H1 (cell line): ENCODE measurements at regions of chr10 and their contacts with region 1.

Region 1: DNA sequence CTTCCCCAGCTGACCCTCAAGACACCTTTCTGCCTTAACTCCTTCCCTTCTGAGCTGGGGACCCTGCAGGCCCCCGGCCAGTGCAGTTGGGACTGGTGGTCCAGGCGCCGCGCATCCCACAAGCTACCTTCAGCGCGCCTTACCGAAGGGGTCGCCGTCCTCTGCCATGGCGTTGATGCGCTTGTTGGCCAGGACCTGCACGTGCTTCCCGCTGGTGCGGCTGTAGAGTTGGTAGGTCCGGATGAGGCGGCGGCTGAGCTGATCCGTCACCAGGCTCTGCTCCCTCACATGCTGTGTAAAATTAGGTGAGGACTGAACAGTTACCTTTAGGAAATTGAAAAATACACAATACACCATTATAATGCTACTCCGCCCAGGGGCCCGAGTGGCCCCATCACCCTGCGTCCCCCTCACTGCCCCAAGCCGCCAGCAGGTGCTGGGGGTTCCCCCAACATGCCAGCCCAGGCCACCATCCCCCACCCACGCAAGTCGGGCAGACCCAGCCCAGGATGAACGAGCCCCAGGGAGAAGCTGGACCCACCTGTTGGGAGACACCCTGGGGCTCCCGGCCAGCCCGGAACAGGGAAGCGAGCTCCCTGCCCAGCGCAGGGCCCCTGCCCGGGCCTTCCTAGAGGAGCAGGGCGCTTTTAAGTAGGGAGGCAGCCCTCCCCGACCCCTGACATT is 1.2 kb downstream of the FGF8 start:
- DNase-seq: peak in 1 of 2 experiments; percentile 79
- H3K4me3 ChIP-seq: peak overlapping the region in 3 of 4 experiments; percentile 27 to 54 (median 35); a peak in 6 of 8 replicates
- H3K27ac ChIP-seq: no peak overlapping the region
- H3K4me1 ChIP-seq: peaks cover 16 to 42% (median 28%) of the 10 kb centered on the region in 4 experiments
- H3K27me3 ChIP-seq: peaks cover 50 to 74% (median 69%) of the 10 kb centered on the region in 4 experiments
- CTCF ChIP-seq: no peak
- EP300 ChIP-seq: no peak
- POLR2A ChIP-seq: no peak
- RAD21 ChIP-seq: no peak

Region 2: DNA sequence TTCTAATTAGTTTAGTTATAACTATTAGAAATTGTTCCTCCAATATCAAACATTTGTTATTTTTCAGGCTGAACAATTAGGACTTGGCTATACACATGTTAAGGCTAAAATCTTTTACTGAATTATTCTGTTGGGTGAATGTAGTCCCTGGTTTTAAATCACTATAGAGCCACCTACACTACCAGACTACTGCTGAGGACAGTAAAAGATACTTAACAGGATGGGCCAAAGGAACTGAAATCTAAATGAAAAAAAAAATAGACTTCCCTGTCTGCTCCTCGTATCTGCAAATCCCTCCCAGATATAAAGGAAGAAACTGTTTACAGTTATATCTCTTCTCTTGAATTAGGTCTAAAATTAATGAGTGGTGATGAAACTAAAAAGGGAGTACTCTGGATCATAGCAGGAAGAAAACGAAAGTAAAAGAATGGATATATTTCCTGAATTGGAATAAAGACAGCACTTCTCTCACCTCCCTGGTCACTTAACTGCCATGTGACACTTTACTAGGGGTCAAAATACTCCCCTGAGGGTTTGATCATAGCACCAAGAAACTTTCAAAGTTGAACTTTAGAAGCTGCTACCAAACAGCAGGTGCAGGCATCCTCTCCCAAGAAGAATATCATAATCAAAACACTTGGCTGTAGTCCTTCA is 92.4 kb before region 1 on chr10:
- CTCF ChIA-PET with region 1: no interaction called
- POLR2A ChIA-PET with region 1: no interaction called
- DNase-seq: no peak
- H3K4me3 ChIP-seq: no peak overlapping the region
- H3K27ac ChIP-seq: no peak overlapping the region
- H3K4me1 ChIP-seq: peaks cover 0 to 5% (median 3%) of the 10 kb centered on the region in 4 experiments; a peak in 4 of 7 replicates
- H3K27me3 ChIP-seq: no peaks in the 10 kb centered on the region
- CTCF ChIP-seq: no peak
- EP300 ChIP-seq: no peak
- POLR2A ChIP-seq: no peak
- RAD21 ChIP-seq: no peak

Region 3: GRCh38 chr10:101759309-101760247 is 15.2 kb before region 1 on chr10:
- CTCF ChIA-PET with region 1: interaction called, 89 read pairs
- POLR2A ChIA-PET with region 1: interaction called, 19 read pairs
- DNase-seq: peak in 1 of 2 experiments; percentile 63
- H3K4me3 ChIP-seq: no peak overlapping the region
- H3K27ac ChIP-seq: no peak overlapping the region
- H3K4me1 ChIP-seq: peaks cover 0 to 9% (median 7%) of the 10 kb centered on the region in 4 experiments; a peak in 6 of 7 replicates
- H3K27me3 ChIP-seq: peaks cover 0 to 5% (median 4%) of the 10 kb centered on the region in 4 experiments; a peak in 3 of 7 replicates
- CTCF ChIP-seq: no peak
- EP300 ChIP-seq: no peak
- POLR2A ChIP-seq: no peak
- RAD21 ChIP-seq: no peak

Region 4: GRCh38 chr10:101858723-101859500 is 84.2 kb after region 1 on chr10:
- CTCF ChIA-PET with region 1: no interaction called
- POLR2A ChIA-PET with region 1: no interaction called
- DNase-seq: no peak
- H3K4me3 ChIP-seq: no peak overlapping the region
- H3K27ac ChIP-seq: no peak overlapping the region
- H3K4me1 ChIP-seq: no peaks in the 10 kb centered on the region
- H3K27me3 ChIP-seq: no peaks in the 10 kb centered on the region
- CTCF ChIP-seq: no peak
- EP300 ChIP-seq: no peak
- POLR2A ChIP-seq: no peak
- RAD21 ChIP-seq: no peak